Adrenal gland (tissue), 19 donors: ENCODE measurements at regions of chr5 and their contacts with region 1.

Region 1: DNA sequence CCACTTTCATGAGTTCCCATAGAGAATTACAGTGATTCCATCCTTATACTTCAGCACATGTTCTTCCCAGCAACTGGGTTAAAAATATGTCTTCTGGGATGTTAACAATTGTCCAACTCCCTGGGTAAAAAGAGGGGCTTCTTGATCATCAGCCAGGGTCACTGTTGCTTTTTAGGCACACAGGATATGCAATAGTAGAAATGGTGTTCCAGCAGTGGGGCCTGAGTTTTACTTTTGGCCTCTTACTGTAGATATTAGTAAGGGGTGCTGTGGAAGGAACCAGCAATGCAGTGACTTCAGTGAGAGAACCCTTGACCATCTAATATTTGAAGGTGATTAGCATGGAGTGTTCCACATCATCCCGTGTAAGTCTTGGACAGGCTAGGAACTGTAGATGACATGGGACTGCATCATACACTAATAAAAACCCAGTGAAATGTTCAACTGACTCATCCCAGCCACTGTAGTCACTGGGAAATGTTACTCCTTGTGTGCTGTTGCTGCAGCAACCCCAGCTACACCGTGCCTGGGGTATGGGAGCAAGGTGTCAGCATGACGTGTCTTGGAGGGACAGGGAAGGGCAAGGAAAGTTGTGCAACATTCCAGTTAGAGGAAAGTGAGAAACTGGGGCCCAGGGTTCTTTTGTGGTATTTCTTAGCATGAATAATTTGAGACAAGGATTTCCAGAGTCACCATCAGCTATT is 610.9 kb downstream of the RAB3C start:
- DNase-seq: no peak
- H3K4me3 ChIP-seq: no peak overlapping the region
- H3K27ac ChIP-seq: no peak overlapping the region
- H3K4me1 ChIP-seq: peaks cover 0 to 2% of the 10 kb centered on the region in 2 donors
- H3K27me3 ChIP-seq: no peaks in the 10 kb centered on the region
- CTCF ChIP-seq: no peak
- POLR2A ChIP-seq: no peak

Region 2: GRCh38 chr5:59152701-59153245 is 41.0 kb before region 1 on chr5:
- intact Hi-C with region 1: no loop called
- DNase-seq: no peak
- H3K4me3 ChIP-seq: no peak overlapping the region
- H3K27ac ChIP-seq: no peak overlapping the region
- H3K4me1 ChIP-seq: no peaks in the 10 kb centered on the region
- H3K27me3 ChIP-seq: no peaks in the 10 kb centered on the region
- CTCF ChIP-seq: no peak
- POLR2A ChIP-seq: no peak

Region 3: DNA sequence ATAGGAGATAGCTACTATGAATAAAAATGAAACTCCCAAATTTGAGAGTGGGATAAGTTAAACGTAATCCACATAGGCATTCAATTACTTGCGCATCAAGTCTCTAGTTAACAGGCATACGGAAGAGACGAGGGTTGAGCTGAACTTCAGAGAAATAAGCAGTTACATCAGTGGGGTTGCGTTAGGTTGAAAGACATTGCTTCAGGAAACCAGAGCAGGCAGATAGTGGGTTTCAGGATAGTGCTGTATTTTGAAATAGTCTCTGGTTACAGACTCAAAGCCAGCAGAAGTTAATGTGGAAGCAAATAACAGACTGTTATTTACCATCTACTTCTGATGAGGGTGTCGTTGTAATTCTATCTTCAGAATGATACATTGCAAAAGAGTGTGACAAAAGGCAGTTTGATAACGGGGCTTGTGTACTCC is 166.4 kb after region 1 on chr5:
- intact Hi-C with region 1: loop called (anchors 5 kb)
- DNase-seq: no peak
- H3K4me3 ChIP-seq: no peak overlapping the region
- H3K27ac ChIP-seq: no peak overlapping the region
- H3K4me1 ChIP-seq: no peaks in the 10 kb centered on the region
- H3K27me3 ChIP-seq: no peaks in the 10 kb centered on the region
- CTCF ChIP-seq: no peak
- POLR2A ChIP-seq: no peak

Region 4: GRCh38 chr5:59380350-59380951 is 186.7 kb after region 1 on chr5:
- intact Hi-C with region 1: loop called in 1 of 2 experiments (anchors 5 kb)
- DNase-seq: no peak
- H3K4me3 ChIP-seq: no peak overlapping the region
- H3K27ac ChIP-seq: no peak overlapping the region
- H3K4me1 ChIP-seq: no peaks in the 10 kb centered on the region
- H3K27me3 ChIP-seq: no peaks in the 10 kb centered on the region
- CTCF ChIP-seq: peak; percentile 13 to 58 (median 43)
- POLR2A ChIP-seq: no peak